ENCODE measurements at regions of chr19 and their contacts with region 1.

Region 1: GRCh38 chr19:36169084-36169760 is 17.0 kb upstream of the COX7A1 start:
- DNase-seq: no peak
- ATAC-seq: peak; percentile 53

Region 2: GRCh38 chr19:36060430-36060829 is 108.8 kb before region 1 on chr19:
- intact Hi-C with region 1: loop called (anchors 5 kb)
- DNase-seq: peak; percentile 67
- ATAC-seq: peak; percentile 93

Region 3: GRCh38 chr19:36132489-36132891 is 36.7 kb before region 1 on chr19:
- intact Hi-C with region 1: loop called (anchors 1 kb)
- DNase-seq: no peak
- ATAC-seq: no peak

Region 4: GRCh38 chr19:36266342-36266961 is 97.2 kb after region 1 on chr19:
- intact Hi-C with region 1: no loop called
- DNase-seq: no peak
- ATAC-seq: no peak